Panc1 (cell line): ENCODE measurements at regions of chr7 and their contacts with region 1.

Region 1: GRCh38 chr7:129091484-129092002 is 36.6 kb upstream of the TNPO3 start:
- DNase-seq: peak; percentile 80
- ATAC-seq: peak; percentile 93
- H3K4me3 ChIP-seq: no peak overlapping the region
- H3K27ac ChIP-seq: no peak overlapping the region
- H3K4me1 ChIP-seq: no peaks in the 10 kb centered on the region
- H3K27me3 ChIP-seq: peaks cover 3% of the 10 kb centered on the region; the same call in 1 of the 2 replicates
- CTCF ChIP-seq: peak; percentile 99

Region 2: GRCh38 chr7:128666200-128666599 is 425.3 kb before region 1 on chr7:
- CTCF ChIA-PET with region 1: no interaction called
- POLR2A ChIA-PET with region 1: no interaction called
- in situ Hi-C with region 1: no loop called
- intact Hi-C with region 1: no loop called
- DNase-seq: no peak
- ATAC-seq: no peak
- H3K4me3 ChIP-seq: no peak overlapping the region
- H3K27ac ChIP-seq: no peak overlapping the region
- H3K4me1 ChIP-seq: no peaks in the 10 kb centered on the region
- H3K27me3 ChIP-seq: no peaks in the 10 kb centered on the region
- CTCF ChIP-seq: peak; percentile 60

Region 3: GRCh38 chr7:128821724-128822123 is 269.8 kb before region 1 on chr7:
- CTCF ChIA-PET with region 1: no interaction called
- POLR2A ChIA-PET with region 1: no interaction called
- in situ Hi-C with region 1: no loop called
- intact Hi-C with region 1: no loop called
- DNase-seq: no peak
- ATAC-seq: no peak
- H3K4me3 ChIP-seq: no peak overlapping the region
- H3K27ac ChIP-seq: no peak overlapping the region
- H3K4me1 ChIP-seq: no peaks in the 10 kb centered on the region
- H3K27me3 ChIP-seq: peaks cover 20% of the 10 kb centered on the region
- CTCF ChIP-seq: no peak

Region 4: DNA sequence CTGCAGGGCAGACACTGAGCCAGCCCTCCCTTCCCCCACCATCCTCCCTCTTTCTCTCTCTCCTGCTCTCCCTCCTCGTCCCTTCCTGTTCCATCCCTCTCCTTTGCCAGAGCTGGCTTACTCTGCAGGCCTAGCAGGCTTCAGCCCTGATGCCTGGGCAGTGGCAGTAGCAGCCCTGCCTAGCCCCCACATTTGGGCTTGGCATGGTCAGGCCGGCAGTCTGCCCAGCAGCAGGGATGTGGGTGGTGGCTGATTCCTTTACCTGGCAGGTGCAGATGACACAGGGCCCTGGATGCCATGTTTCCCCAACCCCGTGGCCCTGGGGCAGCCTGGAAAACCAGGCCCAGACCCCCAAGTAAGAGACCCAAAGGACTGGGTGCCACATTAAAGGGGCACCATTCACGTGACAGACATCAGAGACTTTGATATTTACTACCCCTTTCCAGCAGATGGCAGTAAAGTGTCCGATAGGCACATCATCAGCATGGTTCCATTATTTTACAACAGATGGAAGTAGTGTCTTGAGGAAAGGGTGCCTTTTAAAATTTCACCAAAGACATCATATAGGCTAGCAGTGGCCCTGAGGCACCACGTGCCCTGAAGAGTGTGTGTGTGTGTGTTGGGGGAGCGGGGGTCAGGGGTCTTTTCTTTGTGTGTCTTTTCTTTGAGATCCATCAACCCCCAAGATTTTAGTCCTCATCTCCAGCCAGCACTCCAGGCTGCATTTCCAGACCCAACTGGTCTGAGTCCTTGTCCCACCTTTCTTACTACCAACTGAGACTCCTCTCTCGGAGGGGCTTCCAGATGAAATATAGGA is 187.0 kb before region 1 on chr7:
- CTCF ChIA-PET with region 1: no interaction called
- POLR2A ChIA-PET with region 1: no interaction called
- in situ Hi-C with region 1: no loop called
- intact Hi-C with region 1: loop called (anchors 2 kb)
- DNase-seq: peak; percentile 48
- ATAC-seq: peak; percentile 72
- H3K4me3 ChIP-seq: no peak overlapping the region
- H3K27ac ChIP-seq: no peak overlapping the region
- H3K4me1 ChIP-seq: peaks cover 5% of the 10 kb centered on the region; the same call in 1 of the 2 replicates
- H3K27me3 ChIP-seq: no peaks in the 10 kb centered on the region
- CTCF ChIP-seq: peak; percentile 82

Region 5: DNA sequence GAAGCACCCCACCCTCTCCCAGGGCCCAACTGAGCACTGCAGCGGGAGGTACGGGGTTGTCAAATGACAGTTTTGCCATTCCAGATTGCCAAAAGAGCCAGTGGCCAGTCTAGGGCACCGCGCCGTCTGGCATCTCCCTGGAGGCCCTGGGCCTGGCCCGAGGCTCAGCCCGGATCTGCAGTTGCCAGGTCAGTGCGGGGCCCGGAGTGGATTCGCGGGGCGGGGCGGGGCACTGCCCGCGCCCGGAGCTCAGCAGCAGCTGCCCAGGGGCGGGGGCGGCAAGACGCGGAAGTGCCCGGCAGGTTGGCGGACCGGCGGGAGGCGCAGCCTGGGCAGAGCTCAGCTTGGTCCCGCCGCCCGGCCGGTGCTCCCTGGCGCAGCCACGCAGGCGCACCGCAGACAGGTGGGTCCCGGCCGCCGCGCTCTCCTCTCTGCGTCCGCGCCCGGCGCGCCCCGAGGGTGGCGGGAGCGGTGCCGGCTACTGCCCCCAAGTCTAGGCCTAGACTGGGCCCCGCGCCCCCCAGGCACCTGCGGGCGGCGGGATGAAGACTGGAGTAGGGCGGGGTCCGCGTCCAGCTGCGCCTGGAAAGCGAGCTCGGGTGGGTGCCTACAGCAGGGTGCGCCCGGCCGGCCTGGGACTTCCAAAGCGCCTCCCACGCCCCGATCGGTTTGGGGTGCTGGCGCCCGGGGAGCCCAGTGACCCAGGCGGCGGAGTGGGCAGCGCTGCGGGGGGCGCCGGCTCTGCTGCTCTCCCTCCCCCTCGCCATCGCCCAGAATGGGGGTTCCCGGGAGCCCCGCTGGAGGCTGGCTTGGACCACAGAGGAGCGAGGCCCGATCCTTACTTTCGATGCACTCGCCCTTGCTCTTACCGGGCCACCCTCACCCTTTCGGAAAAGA is 153.6 kb before region 1 on chr7 and contains the start of gene IRF5:
- CTCF ChIA-PET with region 1: no interaction called
- POLR2A ChIA-PET with region 1: interaction called, 6 read pairs
- in situ Hi-C with region 1: no loop called
- intact Hi-C with region 1: loop called (anchors 10 kb)
- DNase-seq: no peak
- ATAC-seq: peak; percentile 79
- H3K4me3 ChIP-seq: peak within 1 kb of the TSS; percentile 54 to 67
- H3K27ac ChIP-seq: no peak within 1 kb of the TSS; the same call in 1 of the 2 replicates
- H3K4me1 ChIP-seq: no peaks in the 10 kb centered on the region
- H3K27me3 ChIP-seq: no peaks in the 10 kb centered on the region
- CTCF ChIP-seq: no peak
- total RNA-seq, gene IRF5: 8.8 TPM

Region 6: GRCh38 chr7:129271500-129272355 is 180.2 kb after region 1 on chr7:
- CTCF ChIA-PET with region 1: no interaction called
- POLR2A ChIA-PET with region 1: no interaction called
- in situ Hi-C with region 1: no loop called
- intact Hi-C with region 1: no loop called
- DNase-seq: peak; percentile 47
- ATAC-seq: peak; percentile 83
- H3K4me3 ChIP-seq: no peak overlapping the region
- H3K27ac ChIP-seq: no peak overlapping the region
- H3K4me1 ChIP-seq: no peaks in the 10 kb centered on the region
- H3K27me3 ChIP-seq: no peaks in the 10 kb centered on the region
- CTCF ChIP-seq: peak; percentile 77

Region 7: DNA sequence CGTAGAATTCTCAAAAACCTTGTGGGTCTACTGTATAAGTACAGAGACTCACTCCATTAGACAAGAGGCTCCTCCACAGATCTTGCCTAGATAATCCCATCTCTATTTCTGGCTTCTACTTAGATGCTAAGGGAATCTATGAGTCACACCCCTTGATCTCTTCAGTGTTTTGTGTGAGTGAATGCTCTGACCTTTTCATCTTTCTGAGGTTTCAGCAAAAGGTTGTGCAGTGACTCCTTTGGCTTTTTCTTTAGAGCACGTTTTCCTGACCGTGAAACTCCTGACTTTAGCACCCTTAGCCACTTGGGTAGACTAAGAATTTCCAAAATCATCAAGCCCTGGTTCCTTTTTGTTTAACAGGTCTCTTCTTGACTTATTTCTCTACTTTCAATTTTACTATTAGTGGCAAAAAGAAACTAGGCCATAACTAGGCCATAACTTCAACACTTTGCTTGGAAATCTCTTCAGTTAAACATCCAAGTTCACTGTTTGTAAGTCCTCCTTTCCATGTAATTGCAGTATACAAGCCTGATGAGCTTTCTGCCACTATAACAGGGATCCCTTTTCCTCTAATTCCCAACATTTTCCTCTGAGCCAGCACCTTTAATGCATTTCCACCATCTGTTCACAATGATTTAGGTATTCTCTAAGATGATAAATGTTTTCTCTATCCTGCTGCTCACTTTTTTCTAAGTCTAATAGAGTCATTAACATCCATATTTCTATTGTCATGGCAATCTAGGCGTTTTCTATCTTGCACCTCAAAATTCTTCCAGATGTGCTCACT is 1557.7 kb after region 1 on chr7:
- CTCF ChIA-PET with region 1: no interaction called
- POLR2A ChIA-PET with region 1: no interaction called
- in situ Hi-C with region 1: no loop called
- intact Hi-C with region 1: no loop called
- DNase-seq: no peak
- ATAC-seq: no peak
- H3K4me3 ChIP-seq: no peak overlapping the region
- H3K27ac ChIP-seq: no peak overlapping the region
- H3K4me1 ChIP-seq: no peaks in the 10 kb centered on the region
- H3K27me3 ChIP-seq: no peaks in the 10 kb centered on the region
- CTCF ChIP-seq: no peak